Right ventricle myocardium inferior (tissue), 1 donor: ENCODE measurements at regions of chr19 and their contacts with region 1.

Region 1: GRCh38 chr19:9934132-9934950 is 2.0 kb downstream of the OLFM2 start:
- DNase-seq: peak; percentile 70
- ATAC-seq: peak; percentile 81

Region 2: DNA sequence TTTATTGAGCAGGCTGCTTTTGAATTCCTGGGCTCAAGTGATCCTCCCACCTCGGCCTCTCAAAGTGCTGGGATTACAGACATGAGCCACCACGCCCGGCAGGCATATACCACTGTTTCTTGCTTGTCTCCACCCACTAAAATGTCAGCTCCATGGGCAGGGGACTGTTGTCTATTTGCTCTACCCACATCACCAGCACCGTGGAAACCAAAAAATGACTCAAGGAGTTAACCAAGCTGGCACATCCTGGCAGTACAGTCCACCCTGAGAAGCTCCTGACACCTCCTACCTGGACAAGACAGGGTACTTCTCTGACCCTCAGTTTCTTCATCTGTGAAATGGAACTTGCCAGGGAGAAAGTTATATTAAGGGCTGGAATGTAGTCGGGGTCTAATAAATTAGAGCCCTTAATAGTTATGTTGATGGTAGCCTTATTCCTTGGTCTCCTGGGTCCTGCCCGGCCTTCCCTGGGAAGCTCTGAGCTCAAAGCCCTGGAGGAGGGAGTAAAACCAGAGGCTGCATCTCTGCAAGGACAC is 92.9 kb after region 1 on chr19:
- intact Hi-C with region 1: loop called (anchors 1 kb)
- DNase-seq: no peak
- ATAC-seq: no peak

Region 3: DNA sequence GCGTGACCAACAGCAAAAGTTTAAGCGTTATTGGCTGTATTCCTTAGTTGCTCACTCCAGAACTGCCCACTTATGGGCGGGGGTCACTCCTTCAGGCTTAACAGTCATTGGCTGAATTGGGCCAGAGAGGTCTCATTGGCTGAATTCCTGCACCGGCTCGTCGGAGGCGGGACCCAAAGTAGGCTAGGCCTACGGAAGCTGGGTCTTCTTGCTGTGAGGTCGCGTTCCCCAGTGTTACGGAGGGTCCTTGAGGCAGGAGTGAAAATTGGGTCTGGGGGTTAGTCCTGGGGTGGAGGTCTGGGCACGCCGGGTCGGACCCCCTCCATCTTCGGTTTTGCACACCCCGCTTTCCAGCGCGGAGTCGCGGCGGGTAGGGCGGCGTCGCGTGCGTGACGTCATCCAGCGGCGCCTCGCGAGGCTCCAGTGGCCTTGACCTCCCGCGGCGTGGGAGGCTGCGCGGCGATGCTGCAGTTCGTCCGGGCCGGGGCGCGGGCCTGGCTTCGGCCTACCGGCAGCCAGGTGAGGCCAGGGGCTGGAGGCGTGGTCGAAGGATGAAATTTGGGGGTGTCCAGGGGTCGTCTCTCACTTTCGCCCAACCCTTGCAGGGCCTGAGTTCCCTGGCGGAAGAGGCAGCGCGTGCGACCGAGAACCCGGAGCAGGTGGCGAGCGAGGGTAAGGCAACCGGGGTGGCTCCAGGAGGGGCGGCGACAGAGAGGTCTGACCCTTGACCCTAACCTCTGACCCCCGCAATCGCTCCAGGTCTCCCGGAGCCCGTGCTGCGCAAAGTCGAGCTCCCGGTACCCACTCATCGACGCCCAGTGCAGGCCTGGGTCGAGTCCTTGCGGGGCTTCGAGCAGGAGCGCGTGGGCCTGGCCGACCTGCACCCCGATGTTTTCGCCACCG is 317.7 kb after region 1 on chr19 and contains the start of gene MRPL4:
- intact Hi-C with region 1: loop called (anchors 5 kb)
- DNase-seq: peak; percentile 96
- ATAC-seq: peak; percentile 94
- total RNA-seq, gene MRPL4: 70.1 TPM

Region 4: GRCh38 chr19:10388957-10389356 is 454.6 kb after region 1 on chr19:
- intact Hi-C with region 1: loop called (anchors 5 kb)
- DNase-seq: peak; percentile 79
- ATAC-seq: peak; percentile 62